PC-9 (cell line): ENCODE measurements at regions of chr17 and their contacts with region 1.

Region 1: GRCh38 chr17:3610523-3610922 is 1.3 kb upstream of the TRPV1 start:
- DNase-seq: no peak
- H3K4me3 ChIP-seq: no peak overlapping the region
- H3K27ac ChIP-seq: no peak overlapping the region
- H3K4me1 ChIP-seq: no peaks in the 10 kb centered on the region
- H3K27me3 ChIP-seq: no peaks in the 10 kb centered on the region
- CTCF ChIP-seq: no peak

Region 2: DNA sequence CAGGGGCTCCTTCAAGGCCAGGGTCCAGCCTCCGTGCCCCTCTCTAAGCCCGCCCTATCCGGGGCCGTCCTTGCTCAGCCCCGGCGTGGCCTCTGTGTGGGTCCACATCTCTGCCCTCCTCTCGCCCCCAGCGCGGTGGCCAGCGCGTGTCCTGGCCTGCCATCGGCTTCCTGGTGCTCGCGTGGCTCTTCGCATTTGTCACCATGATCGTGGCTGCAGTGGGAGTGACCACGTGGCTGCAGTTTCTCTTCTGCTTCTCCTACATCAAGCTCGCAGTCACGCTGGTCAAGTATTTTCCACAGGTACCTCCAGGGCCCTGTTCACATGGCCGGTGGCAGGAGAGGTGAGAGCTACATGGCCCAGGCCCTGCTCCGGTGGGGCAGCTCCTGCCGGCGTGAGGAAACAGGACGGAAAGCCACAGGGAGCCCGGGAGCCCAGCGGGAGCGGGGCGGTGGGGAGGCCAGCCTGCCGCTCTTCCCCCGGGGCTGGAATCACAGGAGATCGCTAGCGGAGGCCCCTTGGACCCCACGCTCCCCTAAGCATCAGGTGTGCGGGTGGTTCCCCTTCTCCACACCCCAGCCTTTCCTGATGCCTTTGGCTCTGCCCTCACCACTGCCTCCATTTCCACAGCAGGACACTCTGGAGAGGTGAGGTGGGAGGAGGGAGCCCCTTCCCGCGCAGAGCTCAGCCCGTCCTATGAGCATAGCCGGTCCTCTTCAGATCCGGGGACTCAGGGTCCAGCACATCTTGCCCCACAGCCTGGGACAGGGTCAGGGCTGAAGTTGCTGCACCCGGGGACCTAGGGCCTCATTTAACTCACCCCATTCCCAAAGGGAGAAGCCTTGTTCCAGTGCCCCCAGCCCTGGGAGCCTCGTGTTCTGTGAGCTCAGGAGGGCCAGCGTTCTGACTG is 47.6 kb after region 1 on chr17:
- CTCF ChIA-PET with region 1: no interaction called
- POLR2A ChIA-PET with region 1: interaction called, 18 read pairs
- intact Hi-C with region 1: no loop called
- DNase-seq: no peak
- H3K4me3 ChIP-seq: no peak overlapping the region
- H3K27ac ChIP-seq: no peak overlapping the region
- H3K4me1 ChIP-seq: peaks cover 11% of the 10 kb centered on the region
- H3K27me3 ChIP-seq: no peaks in the 10 kb centered on the region
- CTCF ChIP-seq: no peak